Calu3 (cell line): ENCODE measurements at regions of chr3 and their contacts with region 1.

Region 1: DNA sequence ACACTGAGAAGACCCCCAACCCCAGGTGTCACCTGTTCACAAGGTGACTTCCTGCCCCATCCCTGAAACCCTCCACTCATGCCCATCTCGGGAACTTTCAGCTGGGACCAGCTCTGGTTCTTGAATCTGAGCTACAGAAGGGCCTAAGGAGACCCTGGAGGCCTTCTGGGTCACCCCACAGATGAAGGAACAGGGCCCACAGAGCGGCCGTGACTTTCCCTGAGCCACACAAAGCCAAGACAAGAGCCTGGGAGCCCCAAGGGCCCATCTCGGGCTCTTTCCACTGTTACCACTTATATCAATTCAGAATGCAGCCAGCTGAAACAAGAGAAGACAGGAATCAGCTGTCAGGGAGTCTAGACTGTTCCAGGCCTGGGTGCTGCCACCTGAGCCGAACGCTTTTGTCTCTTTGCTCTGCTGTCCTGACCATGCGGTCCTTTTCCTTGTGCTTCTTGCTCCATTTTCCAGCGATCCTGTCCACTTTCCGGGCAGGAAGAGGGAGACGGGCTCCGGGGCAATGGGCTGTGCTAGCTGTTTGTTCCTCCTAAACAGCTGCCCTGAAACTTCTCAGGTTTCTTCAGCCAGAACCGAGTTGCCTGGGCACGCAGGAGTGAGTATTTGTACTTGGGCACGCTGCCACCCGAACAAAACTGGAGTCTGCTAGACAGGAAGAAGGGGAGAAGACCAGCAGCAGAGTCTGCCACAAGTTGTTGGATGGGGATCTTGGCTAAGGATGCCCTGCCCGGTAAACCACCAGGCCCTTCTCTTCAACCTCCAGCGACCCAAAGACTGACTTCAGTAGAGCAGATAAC is 28.0 kb upstream of the PIGZ start:
- DNase-seq: no peak
- H3K4me3 Mint-ChIP-seq: no peak overlapping the region
- H3K27ac Mint-ChIP-seq: no peak overlapping the region
- H3K4me1 Mint-ChIP-seq: no peaks in the 10 kb centered on the region
- H3K27me3 Mint-ChIP-seq: no peaks in the 10 kb centered on the region
- CTCF ChIP-seq: no peak

Region 2: GRCh38 chr3:196700801-196701200 is 295.9 kb before region 1 on chr3:
- CTCF ChIA-PET with region 1: interaction called, 11 read pairs
- intact Hi-C with region 1: no loop called
- DNase-seq: no peak
- H3K4me3 Mint-ChIP-seq: no peak overlapping the region
- H3K27ac Mint-ChIP-seq: no peak overlapping the region
- H3K4me1 Mint-ChIP-seq: no peaks in the 10 kb centered on the region
- H3K27me3 Mint-ChIP-seq: no peaks in the 10 kb centered on the region
- CTCF ChIP-seq: no peak

Region 3: GRCh38 chr3:196889844-196890708 is 106.6 kb before region 1 on chr3:
- CTCF ChIA-PET with region 1: no interaction called
- intact Hi-C with region 1: no loop called
- DNase-seq: no peak
- H3K4me3 Mint-ChIP-seq: no peak overlapping the region
- H3K27ac Mint-ChIP-seq: peak overlapping the region; percentile 50
- H3K4me1 Mint-ChIP-seq: no peaks in the 10 kb centered on the region
- H3K27me3 Mint-ChIP-seq: no peaks in the 10 kb centered on the region
- CTCF ChIP-seq: no peak